ENCODE measurements at regions of chr3 and their contacts with region 1.

Region 1: GRCh38 chr3:84547971-84548970 is 410.5 kb upstream of the CADM2 start:
- DNase-seq: no peak
- ATAC-seq: peak; percentile 39
- H3K4me3 Mint-ChIP-seq: no peak overlapping the region
- H3K27ac Mint-ChIP-seq: no peak overlapping the region
- H3K4me1 Mint-ChIP-seq: no peaks in the 10 kb centered on the region
- H3K27me3 Mint-ChIP-seq: no peaks in the 10 kb centered on the region
- CTCF ChIP-seq: peak; percentile 55

Region 2: GRCh38 chr3:84573962-84574361 is 25.7 kb after region 1 on chr3:
- CTCF ChIA-PET with region 1: no interaction called
- POLR2A ChIA-PET with region 1: no interaction called
- intact Hi-C with region 1: no loop called
- DNase-seq: no peak
- ATAC-seq: no peak
- H3K4me3 Mint-ChIP-seq: no peak overlapping the region
- H3K27ac Mint-ChIP-seq: no peak overlapping the region
- H3K4me1 Mint-ChIP-seq: no peaks in the 10 kb centered on the region
- H3K27me3 Mint-ChIP-seq: no peaks in the 10 kb centered on the region
- CTCF ChIP-seq: no peak

Region 3: GRCh38 chr3:85576091-85576690 is 1027.9 kb after region 1 on chr3:
- CTCF ChIA-PET with region 1: interaction called, 3 read pairs
- POLR2A ChIA-PET with region 1: no interaction called
- intact Hi-C with region 1: loop called (anchors 5 kb)
- DNase-seq: peak; percentile 68
- ATAC-seq: no peak
- H3K4me3 Mint-ChIP-seq: no peak overlapping the region
- H3K27ac Mint-ChIP-seq: no peak overlapping the region
- H3K4me1 Mint-ChIP-seq: no peaks in the 10 kb centered on the region
- H3K27me3 Mint-ChIP-seq: no peaks in the 10 kb centered on the region
- CTCF ChIP-seq: peak; percentile 76